ENCODE measurements at regions of chr11 and their contacts with region 1.

Region 1: DNA sequence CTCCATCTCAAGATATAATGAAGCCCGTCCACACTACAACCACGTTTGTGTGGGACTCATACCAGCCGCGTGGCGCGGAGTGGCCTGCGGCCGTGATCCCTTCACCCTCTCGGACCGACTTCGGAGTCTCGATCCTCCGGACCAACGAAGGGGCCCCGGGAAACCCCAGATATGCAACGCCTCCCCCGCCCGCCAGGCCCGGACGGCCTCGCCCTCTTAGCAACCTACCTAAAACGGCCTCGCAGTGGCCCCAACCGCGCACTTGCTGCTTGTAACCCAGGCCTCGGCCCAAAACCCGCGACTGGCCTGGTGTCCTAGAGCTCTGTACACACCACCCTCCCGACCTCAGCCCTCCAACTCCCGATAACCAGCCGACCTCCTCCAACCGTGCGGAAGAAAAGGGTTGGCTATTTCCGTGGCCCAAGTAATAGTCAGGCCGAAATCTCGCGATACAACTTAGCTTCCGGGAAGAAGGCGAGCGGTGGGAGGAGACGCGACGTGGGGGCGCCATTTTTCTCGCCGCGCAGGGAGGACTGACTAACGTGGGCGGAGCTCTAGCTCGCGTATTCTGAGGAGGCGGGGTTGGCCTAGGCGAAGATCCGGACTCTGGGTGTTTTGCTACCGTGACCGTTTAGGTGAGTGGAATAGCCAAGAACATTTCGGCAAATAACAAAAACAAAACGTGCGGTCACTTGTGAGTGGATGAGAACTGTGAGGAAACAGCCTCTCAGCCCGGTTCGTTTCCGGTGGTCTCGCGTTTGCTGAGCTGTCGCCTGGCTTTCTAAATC is at the starts of genes C11orf54 and TAF1D:
- DNase-seq: peak; percentile 99
- H3K4me3 ChIP-seq: peak within 1 kb of the TSS; percentile 62 to 90 (median 78)
- H3K27ac ChIP-seq: peak within 1 kb of the TSS; percentile 89 to 96 (median 93)
- H3K4me1 ChIP-seq: peaks cover 0 to 53% (median 50%) of the 10 kb centered on the region in 4 donors
- H3K27me3 ChIP-seq: no peaks in the 10 kb centered on the region
- CTCF ChIP-seq: no peak
- EP300 ChIP-seq: no peak
- POLR2A ChIP-seq: peak; percentile 82 to 87
- total RNA-seq, gene C11orf54: 34.9 to 56.0 (median 45.2) TPM
- total RNA-seq, gene TAF1D: 89.2 to 111 (median 94.4) TPM

Region 2: DNA sequence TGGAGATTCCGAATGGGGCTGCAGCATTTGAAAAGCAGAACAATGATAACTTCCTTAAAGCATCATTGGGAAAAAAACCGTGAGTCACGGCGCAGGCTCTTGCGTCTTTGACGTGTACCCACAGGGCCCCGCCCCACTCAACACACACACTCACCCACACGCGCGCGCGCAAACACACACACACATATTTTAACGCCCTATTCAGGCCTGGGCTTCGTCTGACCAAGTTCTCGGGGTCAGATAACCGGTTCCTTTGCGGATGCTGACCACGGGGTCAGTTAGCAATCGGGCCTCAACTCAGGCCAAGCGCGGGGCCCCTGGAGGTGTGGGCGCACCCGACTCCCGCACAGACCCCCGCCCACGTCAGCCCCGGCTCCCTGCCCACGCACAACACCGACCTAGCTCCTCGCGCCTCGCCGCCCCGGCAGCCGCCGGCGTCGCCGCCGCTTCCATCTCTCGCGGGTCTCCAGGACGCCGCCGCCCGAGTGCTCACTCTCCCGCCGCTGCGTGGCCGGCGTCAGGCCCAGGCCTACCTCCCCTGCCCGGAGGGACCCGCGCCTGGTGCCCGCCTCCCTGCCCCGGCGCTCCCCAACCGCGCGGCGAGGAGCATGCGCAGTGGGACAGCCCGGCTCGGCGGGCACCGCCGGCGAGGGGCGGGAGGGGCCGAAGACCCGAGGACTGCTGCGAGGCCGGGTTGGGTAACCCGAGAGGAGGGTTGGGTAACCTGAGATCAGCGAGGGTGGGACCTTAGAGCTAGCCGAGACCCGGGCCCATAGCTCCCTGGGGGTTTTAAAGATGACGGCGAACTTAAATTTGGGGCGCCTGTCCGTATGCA is 543.7 kb before region 1 on chr11 and contains the start of gene SLC36A4:
- intact Hi-C with region 1: loop called (anchors 5 kb)
- DNase-seq: peak; percentile 96
- H3K4me3 ChIP-seq: peak within 1 kb of the TSS; percentile 52 to 98 (median 67)
- H3K27ac ChIP-seq: peak within 1 kb of the TSS; percentile 83 to 99 (median 93)
- H3K4me1 ChIP-seq: peaks cover 0 to 12% (median 6%) of the 10 kb centered on the region in 4 donors
- H3K27me3 ChIP-seq: no peaks in the 10 kb centered on the region
- CTCF ChIP-seq: no peak
- EP300 ChIP-seq: peak in 2 of 4 donors; percentile 17 to 69
- POLR2A ChIP-seq: peak; percentile 35 to 51
- total RNA-seq, gene SLC36A4: 14.6 to 17.7 (median 16.4) TPM

Region 3: DNA sequence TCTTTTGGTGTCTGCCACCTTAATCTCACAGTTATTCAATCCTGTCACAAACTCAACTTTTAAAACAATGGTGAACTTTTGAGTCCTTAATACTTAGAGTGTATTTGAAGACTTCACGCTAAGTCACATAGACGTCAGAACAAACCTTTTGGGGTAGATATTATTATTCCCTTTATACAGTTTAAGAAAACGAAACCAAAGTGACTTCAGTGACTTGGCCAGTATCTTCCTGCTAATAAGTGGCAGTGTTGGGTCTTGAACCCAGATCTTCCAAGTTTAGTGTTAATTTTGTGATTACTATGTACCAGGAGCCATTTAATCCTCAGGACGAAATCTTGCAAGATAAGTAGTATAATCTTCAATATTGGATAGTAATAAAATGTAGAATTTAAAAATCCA is 79.1 kb before region 1 on chr11:
- intact Hi-C with region 1: loop called (anchors 5 kb)
- DNase-seq: no peak
- H3K4me3 ChIP-seq: peak overlapping the region; percentile 67 to 97 (median 78)
- H3K27ac ChIP-seq: peak overlapping the region; percentile 82 to 95 (median 84)
- H3K4me1 ChIP-seq: peaks cover 0 to 16% (median 6%) of the 10 kb centered on the region in 4 donors
- H3K27me3 ChIP-seq: no peaks in the 10 kb centered on the region
- CTCF ChIP-seq: no peak
- EP300 ChIP-seq: no peak
- POLR2A ChIP-seq: no peak

Region 4: DNA sequence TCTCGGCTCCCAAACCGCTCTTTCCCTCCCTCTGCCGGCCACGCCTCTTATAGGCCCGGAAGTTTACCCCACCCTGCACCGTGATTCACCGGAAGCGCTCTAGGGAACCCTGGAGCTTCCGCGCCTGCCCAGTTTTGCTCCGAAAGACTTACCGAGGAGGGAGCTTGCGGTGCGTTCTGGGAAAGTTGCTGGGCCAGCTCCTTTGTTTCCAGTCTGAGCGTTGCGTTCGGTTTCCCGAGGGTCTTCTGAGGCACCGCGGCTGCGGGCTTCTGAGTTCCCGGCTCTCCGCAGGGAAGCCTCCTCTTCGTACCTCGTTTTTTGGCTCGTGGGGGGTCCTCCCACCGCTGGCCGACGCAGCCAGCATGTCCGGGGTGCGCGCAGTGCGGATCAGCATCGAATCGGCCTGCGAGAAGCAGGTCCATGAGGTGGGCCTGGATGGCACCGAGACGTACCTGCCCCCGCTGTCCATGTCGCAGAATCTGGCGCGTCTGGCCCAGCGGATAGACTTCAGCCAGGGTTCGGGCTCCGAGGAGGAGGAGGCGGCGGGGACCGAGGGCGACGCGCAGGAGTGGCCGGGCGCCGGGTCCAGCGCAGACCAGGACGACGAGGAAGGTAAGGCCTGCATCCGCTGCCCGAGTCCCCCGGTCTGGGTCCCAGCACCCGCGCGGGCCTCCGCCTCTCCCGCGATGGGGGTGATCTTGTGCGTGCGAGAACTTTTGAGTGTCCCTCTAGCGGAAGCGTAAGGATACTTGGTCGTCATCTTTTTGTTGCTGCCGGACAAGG is 43.1 kb after region 1 on chr11 and contains the start of gene MED17:
- intact Hi-C with region 1: loop called (anchors 2 kb)
- DNase-seq: peak; percentile 96
- H3K4me3 ChIP-seq: peak within 1 kb of the TSS; percentile 72 to 97 (median 88)
- H3K27ac ChIP-seq: peak within 1 kb of the TSS; percentile 93 to 98 (median 96)
- H3K4me1 ChIP-seq: peaks cover 0 to 39% (median 37%) of the 10 kb centered on the region in 4 donors
- H3K27me3 ChIP-seq: no peaks in the 10 kb centered on the region
- CTCF ChIP-seq: peak; percentile 30 to 48 (median 39)
- EP300 ChIP-seq: no peak
- POLR2A ChIP-seq: peak; percentile 72 to 79
- total RNA-seq, gene MED17: 19.9 to 28.9 (median 23.9) TPM

Region 5: GRCh38 chr11:94134651-94135512 is 393.6 kb after region 1 on chr11:
- intact Hi-C with region 1: loop called (anchors 10 kb)
- DNase-seq: peak; percentile 87
- H3K4me3 ChIP-seq: no peak overlapping the region
- H3K27ac ChIP-seq: peak overlapping the region; percentile 65 to 95 (median 80)
- H3K4me1 ChIP-seq: peaks cover 0 to 71% (median 62%) of the 10 kb centered on the region in 4 donors
- H3K27me3 ChIP-seq: no peaks in the 10 kb centered on the region
- CTCF ChIP-seq: no peak
- EP300 ChIP-seq: no peak
- POLR2A ChIP-seq: no peak

Region 6: DNA sequence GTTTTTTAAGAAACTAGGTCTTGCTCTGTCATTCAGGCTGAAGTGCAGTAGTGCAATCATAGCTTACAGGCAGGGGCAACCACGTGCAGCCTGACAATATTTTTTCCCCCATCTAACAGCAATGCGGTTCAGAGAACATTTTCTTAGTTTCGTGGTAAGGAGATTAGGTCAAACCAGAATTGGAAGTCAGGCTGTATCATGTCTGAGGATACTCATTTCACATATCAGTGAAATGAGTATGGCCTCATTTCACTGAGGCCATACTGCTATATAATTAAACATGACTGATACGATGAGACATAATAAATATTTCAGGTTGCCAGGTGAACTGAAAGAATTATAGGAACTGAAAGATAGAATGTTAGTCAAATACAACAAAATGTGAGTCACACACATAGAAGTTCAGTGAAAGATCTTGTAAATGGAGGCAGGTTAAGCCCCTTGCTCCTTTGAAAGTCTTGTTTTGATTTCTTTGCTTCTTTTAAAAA is 530.6 kb after region 1 on chr11:
- intact Hi-C with region 1: no loop called
- DNase-seq: no peak
- H3K4me3 ChIP-seq: no peak overlapping the region
- H3K27ac ChIP-seq: no peak overlapping the region
- H3K4me1 ChIP-seq: no peaks in the 10 kb centered on the region
- H3K27me3 ChIP-seq: no peaks in the 10 kb centered on the region
- CTCF ChIP-seq: no peak
- EP300 ChIP-seq: no peak
- POLR2A ChIP-seq: no peak

Region 7: GRCh38 chr11:94493281-94494125 is 752.2 kb after region 1 on chr11 and contains the starts of genes ANKRD49 and MRE11:
- intact Hi-C with region 1: loop called (anchors 5 kb)
- DNase-seq: peak; percentile 99
- H3K4me3 ChIP-seq: peak within 1 kb of the TSS; percentile 72 to 92 (median 82)
- H3K27ac ChIP-seq: peak within 1 kb of the TSS; percentile 82 to 88 (median 86)
- H3K4me1 ChIP-seq: peaks cover 0 to 30% (median 28%) of the 10 kb centered on the region in 4 donors
- H3K27me3 ChIP-seq: no peaks in the 10 kb centered on the region
- CTCF ChIP-seq: no peak
- EP300 ChIP-seq: no peak
- POLR2A ChIP-seq: peak; percentile 68 to 72
- total RNA-seq, gene ANKRD49: 19.3 to 27.7 (median 23.4) TPM
- total RNA-seq, gene MRE11: 12.5 to 26.6 (median 16.3) TPM